Mammary epithelial cell (primary cell): ENCODE measurements at regions of chr19 and their contacts with region 1.

Region 1: GRCh38 chr19:9834726-9835506 is at the start of gene PIN1:
- DNase-seq: peak; percentile 98
- H3K4me3 ChIP-seq: peak within 1 kb of the TSS; percentile 89 to 91 (median 90)
- H3K27ac ChIP-seq: peak within 1 kb of the TSS; percentile 41
- H3K4me1 ChIP-seq: peaks cover 6% of the 10 kb centered on the region
- H3K27me3 ChIP-seq: no peaks in the 10 kb centered on the region
- CTCF ChIP-seq: peak in 1 of 2 donors; percentile 65
- total RNA-seq, gene PIN1: 50.3 to 77.4 TPM

Region 2: DNA sequence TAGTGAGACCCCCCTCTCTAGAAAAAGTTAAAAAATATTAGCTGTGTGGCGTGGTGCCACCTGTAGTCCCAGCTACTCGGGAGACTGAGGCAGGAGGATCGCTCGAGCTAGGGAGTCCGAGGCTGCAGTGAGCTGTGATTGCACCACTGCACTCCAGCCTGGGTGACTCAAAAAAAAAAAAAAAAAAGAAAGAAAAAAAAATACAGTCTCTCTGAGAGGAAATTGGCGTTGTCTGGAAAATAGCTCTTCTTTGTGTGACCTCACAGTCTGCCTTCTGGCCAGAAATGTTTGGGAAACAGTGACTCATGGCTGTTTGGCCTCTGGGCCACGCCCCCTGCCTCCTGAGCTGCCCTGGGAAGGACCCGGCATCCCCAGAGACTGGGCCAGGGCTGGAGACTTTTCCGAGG is 1411.1 kb before region 1 on chr19:
- CTCF ChIA-PET with region 1: interaction called, 17 read pairs
- dilution Hi-C with region 1: no loop called
- in situ Hi-C with region 1: no loop called
- intact Hi-C with region 1: no loop called
- DNase-seq: peak; percentile 93
- H3K4me3 ChIP-seq: no peak overlapping the region
- H3K27ac ChIP-seq: no peak overlapping the region
- H3K4me1 ChIP-seq: peaks cover 10% of the 10 kb centered on the region
- H3K27me3 ChIP-seq: no peaks in the 10 kb centered on the region
- CTCF ChIP-seq: no peak

Region 3: GRCh38 chr19:9757544-9758501 is 77.1 kb before region 1 on chr19:
- CTCF ChIA-PET with region 1: no interaction called
- dilution Hi-C with region 1: no loop called
- in situ Hi-C with region 1: no loop called
- intact Hi-C with region 1: no loop called
- DNase-seq: no peak
- H3K4me3 ChIP-seq: no peak overlapping the region
- H3K27ac ChIP-seq: no peak overlapping the region
- H3K4me1 ChIP-seq: no peaks in the 10 kb centered on the region
- H3K27me3 ChIP-seq: no peaks in the 10 kb centered on the region
- CTCF ChIP-seq: no peak

Region 4: GRCh38 chr19:9818734-9819589 is 16.0 kb before region 1 on chr19 and contains the start of gene FBXL12:
- CTCF ChIA-PET with region 1: no interaction called
- dilution Hi-C with region 1: no loop called
- in situ Hi-C with region 1: no loop called
- intact Hi-C with region 1: loop called (anchors 1 kb)
- DNase-seq: peak; percentile 99
- H3K4me3 ChIP-seq: peak within 1 kb of the TSS; percentile 83 to 99 (median 94)
- H3K27ac ChIP-seq: peak within 1 kb of the TSS; percentile 89
- H3K4me1 ChIP-seq: peaks cover 4% of the 10 kb centered on the region
- H3K27me3 ChIP-seq: no peaks in the 10 kb centered on the region
- CTCF ChIP-seq: no peak
- total RNA-seq, gene FBXL12: 16.3 to 28.3 TPM